ENCODE measurements at regions of chrX and their contacts with region 1.

Region 1: DNA sequence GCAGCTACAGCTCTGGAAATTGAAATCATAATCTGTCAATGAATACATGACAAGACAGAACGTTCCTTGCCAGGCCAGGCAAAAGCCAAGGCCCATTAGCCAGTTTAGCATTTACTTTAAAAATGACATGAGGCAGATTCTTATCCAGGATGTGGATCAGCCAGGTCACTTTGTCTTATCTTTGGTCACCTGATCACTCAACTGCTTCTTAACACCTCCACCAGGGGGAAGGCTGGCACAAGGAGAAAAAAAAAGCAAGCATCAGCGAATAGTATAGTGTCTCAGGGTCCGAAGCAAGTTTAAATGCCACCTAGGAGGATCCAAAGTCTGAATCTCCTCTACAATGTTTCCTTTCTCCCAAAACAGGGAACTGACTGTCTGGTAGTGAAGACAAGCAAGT is 18.8 kb downstream of the ATP1B4 start:
- DNase-seq: peak in 27 of 35 experiments; percentile 0 to 64 (median 11)
- ATAC-seq: peak in 3 of 4 experiments; percentile 72 to 82 (median 73)
- H3K4me3 ChIP-seq: no peak overlapping the region
- H3K4me3 Mint-ChIP-seq: no peak overlapping the region
- H3K27ac ChIP-seq: no peak overlapping the region
- H3K27ac Mint-ChIP-seq: no peak overlapping the region
- H3K4me1 ChIP-seq: no peaks in the 10 kb centered on the region
- H3K4me1 Mint-ChIP-seq: peaks cover 6 to 8% (median 8%) of the 10 kb centered on the region in 3 donors
- H3K27me3 ChIP-seq: no peaks in the 10 kb centered on the region
- H3K27me3 Mint-ChIP-seq: peaks cover 4 to 14% of the 10 kb centered on the region in 2 donors

Region 2: GRCh38 chrX:120290107-120290506 is 90.6 kb before region 1 on chrX:
- CTCF ChIA-PET with region 1: no interaction called
- POLR2A ChIA-PET with region 1: no interaction called
- DNase-seq: no peak
- ATAC-seq: no peak
- H3K4me3 ChIP-seq: no peak overlapping the region
- H3K4me3 Mint-ChIP-seq: no peak overlapping the region
- H3K27ac ChIP-seq: no peak overlapping the region
- H3K27ac Mint-ChIP-seq: no peak overlapping the region
- H3K4me1 ChIP-seq: peaks cover under 1 to 1% of the 10 kb centered on the region in 2 experiments
- H3K4me1 Mint-ChIP-seq: peaks cover 5 to 12% (median 5%) of the 10 kb centered on the region in 3 donors
- H3K27me3 ChIP-seq: no peaks in the 10 kb centered on the region
- H3K27me3 Mint-ChIP-seq: peaks cover 0 to 13% of the 10 kb centered on the region in 2 donors

Region 3: GRCh38 chrX:120419463-120419862 is 38.8 kb after region 1 on chrX:
- CTCF ChIA-PET with region 1: no interaction called
- POLR2A ChIA-PET with region 1: no interaction called
- DNase-seq: peak in 29 of 35 experiments; percentile 2 to 43 (median 11)
- ATAC-seq: peak in 3 of 4 experiments; percentile 37 to 73 (median 46)
- H3K4me3 ChIP-seq: no peak overlapping the region
- H3K4me3 Mint-ChIP-seq: peak overlapping the region in 1 of 3 donors; percentile 37
- H3K27ac ChIP-seq: peak overlapping the region; percentile 72
- H3K27ac Mint-ChIP-seq: peak overlapping the region; percentile 85 to 89
- H3K4me1 ChIP-seq: peaks cover 5 to 27% of the 10 kb centered on the region in 2 experiments
- H3K4me1 Mint-ChIP-seq: peaks cover 18 to 30% (median 23%) of the 10 kb centered on the region in 3 donors
- H3K27me3 ChIP-seq: no peaks in the 10 kb centered on the region
- H3K27me3 Mint-ChIP-seq: peaks cover 0 to 9% of the 10 kb centered on the region in 2 donors

Region 4: GRCh38 chrX:120452131-120452530 is 71.4 kb after region 1 on chrX:
- CTCF ChIA-PET with region 1: interaction called, 9 to 16 read pairs
- POLR2A ChIA-PET with region 1: no interaction called
- DNase-seq: peak in 3 of 35 experiments; percentile 7 to 30 (median 10)
- ATAC-seq: peak in 1 of 4 experiments; percentile 49
- H3K4me3 ChIP-seq: no peak overlapping the region
- H3K4me3 Mint-ChIP-seq: no peak overlapping the region
- H3K27ac ChIP-seq: no peak overlapping the region
- H3K27ac Mint-ChIP-seq: peak overlapping the region in 1 of 2 donors; percentile 13
- H3K4me1 ChIP-seq: peaks cover 2 to 9% of the 10 kb centered on the region in 2 experiments
- H3K4me1 Mint-ChIP-seq: peaks cover 3 to 28% (median 13%) of the 10 kb centered on the region in 3 donors
- H3K27me3 ChIP-seq: no peaks in the 10 kb centered on the region
- H3K27me3 Mint-ChIP-seq: no peaks in the 10 kb centered on the region

Measured in T-cell (primary cell).